GM13976 (cell line): ENCODE measurements at regions of chr11 and their contacts with region 1.

Region 1: DNA sequence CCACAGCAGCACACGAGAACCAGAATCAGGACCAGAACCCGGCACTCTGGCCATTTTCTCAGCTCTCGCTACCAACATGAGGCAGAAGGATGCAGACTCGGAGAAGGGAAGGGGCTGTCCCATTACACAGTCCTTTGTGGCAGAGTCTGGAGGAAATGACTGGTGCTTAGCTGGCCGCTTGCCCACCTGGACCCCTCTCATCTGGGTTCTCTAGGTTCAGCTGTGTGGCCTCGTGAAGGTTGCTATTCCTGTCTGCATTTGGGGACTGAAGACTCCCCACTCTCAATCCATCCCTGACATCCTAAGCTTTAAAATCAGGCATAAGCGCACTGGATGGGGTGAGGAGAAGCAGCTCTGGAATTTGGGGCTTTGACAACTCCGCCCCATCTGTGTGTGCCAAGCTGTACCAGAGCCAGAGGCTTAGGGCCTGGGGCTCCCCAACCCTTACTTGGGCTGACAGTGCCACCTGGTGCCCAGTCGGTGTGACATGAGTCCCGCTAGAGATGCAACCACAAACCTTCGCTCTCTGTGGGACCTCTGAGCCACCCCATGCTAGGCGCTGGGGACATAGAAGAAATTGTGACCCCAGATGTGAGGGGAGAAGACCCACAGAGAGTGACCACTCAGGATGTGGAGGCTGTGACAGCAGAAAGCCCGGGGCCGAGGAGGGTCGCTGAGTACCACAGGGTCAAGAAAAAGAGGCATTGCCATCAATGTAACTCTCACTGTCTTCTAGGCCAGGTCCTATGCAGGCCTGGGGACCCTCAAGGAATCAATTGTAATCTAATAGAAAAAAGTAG is 35.9 kb upstream of the FCHSD2 start:
- DNase-seq: peak; percentile 89
- CTCF ChIP-seq: peak; percentile 81

Region 2: GRCh38 chr11:72831513-72832300 is 346.3 kb before region 1 on chr11:
- in situ Hi-C with region 1: loop called (anchors 10 kb)
- DNase-seq: peak; percentile 65
- CTCF ChIP-seq: peak; percentile 82

Region 3: GRCh38 chr11:73463359-73463758 is 285.4 kb after region 1 on chr11:
- in situ Hi-C with region 1: no loop called
- DNase-seq: no peak
- CTCF ChIP-seq: no peak

Region 4: DNA sequence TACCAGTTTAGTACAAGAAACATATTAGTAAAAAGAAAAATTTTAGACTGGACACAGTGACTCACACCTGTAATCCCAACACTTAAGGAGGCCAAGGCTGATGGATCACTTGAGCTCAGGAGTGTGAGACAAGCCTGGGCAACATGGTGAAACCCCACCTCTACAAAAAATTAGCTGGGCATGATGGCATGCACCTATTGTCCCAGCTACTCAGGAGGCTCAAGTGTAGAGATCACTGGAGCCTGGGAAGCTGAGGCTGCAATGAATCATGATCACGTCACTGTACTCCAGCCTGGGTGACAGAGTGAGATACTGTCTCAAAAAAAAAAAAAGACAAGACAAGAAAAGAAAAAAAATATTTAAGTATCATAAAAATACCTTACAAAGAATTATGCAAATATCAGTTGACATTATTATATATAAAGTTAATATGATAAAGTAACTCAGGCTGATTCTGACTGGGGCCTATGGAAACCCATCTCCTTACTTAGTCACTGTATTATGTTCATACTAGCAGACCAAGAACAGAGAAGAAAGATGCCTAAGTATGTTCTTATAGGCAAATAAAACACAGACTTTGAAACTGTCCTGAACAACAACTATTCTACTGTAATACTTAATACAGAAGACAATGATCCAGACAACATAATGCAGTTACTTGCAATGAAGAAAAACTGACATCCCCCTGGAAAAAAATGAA is 392.6 kb after region 1 on chr11:
- in situ Hi-C with region 1: no loop called
- DNase-seq: no peak
- CTCF ChIP-seq: no peak

Region 5: DNA sequence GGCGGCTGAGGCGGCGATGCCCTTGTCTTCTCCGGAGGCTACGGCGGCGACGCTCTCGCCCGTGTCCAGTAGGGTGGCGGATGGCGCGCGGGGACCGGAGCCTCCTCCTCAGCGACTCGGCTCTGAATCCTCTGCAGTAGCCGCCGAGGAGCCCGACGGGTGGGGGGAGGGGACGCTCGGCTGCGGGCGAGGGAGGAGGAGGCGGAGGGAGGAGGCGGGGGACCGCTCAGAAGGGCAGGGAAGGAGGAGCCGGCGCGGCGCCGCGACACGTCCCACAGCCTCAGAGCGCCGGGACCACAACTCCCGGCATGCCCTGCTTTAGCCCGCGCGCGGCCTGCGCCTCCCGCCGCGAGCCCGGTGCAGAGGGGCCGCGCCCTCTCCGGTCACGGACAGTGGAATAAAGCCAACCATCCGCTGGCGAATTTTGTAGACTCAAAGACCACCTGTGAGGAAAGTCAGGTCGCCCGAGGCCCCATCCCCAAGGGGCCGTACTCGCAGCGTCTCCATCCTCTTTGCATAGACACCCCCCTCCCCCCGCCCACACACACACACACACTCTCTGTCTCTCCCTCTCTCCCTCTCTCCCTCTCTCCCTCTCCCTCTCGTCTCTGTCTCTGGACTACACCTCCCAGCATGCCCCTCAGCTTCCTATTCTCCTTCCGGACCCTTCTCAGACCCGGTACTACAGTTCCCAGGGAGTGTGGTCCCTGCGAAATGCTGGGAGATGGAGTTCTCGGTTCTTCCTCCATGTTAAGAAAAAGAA is 420.2 kb after region 1 on chr11 and contains the start of gene FAM168A:
- in situ Hi-C with region 1: no loop called
- DNase-seq: peak; percentile 97
- CTCF ChIP-seq: no peak